ENCODE measurements at regions of chr17 and their contacts with region 1.

Region 1: GRCh38 chr17:51000835-51001638 is 119.6 kb downstream of the SPAG9 start:
- DNase-seq: no peak
- ATAC-seq: peak; percentile 59 to 65 (median 62)
- H3K4me3 ChIP-seq: no peak overlapping the region
- H3K27ac ChIP-seq: no peak overlapping the region
- H3K4me1 ChIP-seq: peaks cover 0 to 7% (median 0%) of the 10 kb centered on the region in 12 donors
- H3K27me3 ChIP-seq: no peaks in the 10 kb centered on the region
- CTCF ChIP-seq: peak; percentile 27 to 72 (median 57)
- POLR2A ChIP-seq: no peak

Region 2: DNA sequence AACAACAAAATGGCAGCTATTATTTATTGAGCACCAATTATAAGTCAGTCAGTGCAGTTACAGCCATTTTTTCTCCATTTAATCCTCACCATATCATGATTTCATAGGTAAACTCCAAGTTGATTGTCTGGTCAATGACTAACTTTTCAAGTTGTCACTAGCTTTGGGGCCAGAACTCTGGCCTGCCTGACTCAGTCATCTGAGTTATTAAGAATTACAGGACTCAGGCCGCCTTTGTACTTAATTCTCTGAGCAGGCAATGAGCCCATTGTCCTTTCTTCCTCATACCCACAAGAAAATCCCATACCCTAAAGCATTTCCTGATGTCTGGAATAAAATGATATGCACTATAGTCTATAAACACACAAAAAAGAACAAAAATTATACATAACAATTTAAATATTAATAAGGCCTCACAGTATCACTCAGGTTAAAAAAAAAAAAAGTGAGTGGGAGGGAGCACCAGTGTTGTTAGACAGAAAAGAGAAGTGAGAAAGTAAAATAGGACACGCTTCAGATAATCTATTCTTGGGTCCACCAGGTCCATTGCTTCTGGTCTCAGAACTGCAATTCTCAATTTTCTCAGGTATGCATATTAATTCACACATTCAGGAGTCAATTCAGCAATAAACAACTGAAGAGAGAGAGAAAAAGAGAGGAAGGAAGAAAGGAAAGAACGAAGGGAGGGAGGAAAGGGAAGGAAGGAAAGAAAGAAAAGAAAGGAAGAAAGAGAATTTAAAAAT is 49.4 kb after region 1 on chr17:
- intact Hi-C with region 1: loop called in 7 of 10 experiments (anchors 5 to 10 kb)
- DNase-seq: no peak
- ATAC-seq: no peak
- H3K4me3 ChIP-seq: no peak overlapping the region
- H3K27ac ChIP-seq: no peak overlapping the region
- H3K4me1 ChIP-seq: peaks cover 0 to 33% (median 3%) of the 10 kb centered on the region in 12 donors
- H3K27me3 ChIP-seq: no peaks in the 10 kb centered on the region
- CTCF ChIP-seq: no peak
- POLR2A ChIP-seq: no peak

Region 3: GRCh38 chr17:51166197-51166986 is 165.4 kb after region 1 on chr17 and contains the start of gene NME2:
- intact Hi-C with region 1: loop called in 2 of 10 experiments (anchors 5 kb)
- DNase-seq: peak; percentile 91 to 95 (median 94)
- ATAC-seq: peak; percentile 89 to 97 (median 97)
- H3K4me3 ChIP-seq: peak within 1 kb of the TSS; percentile 76 to 95 (median 90)
- H3K27ac ChIP-seq: peak within 1 kb of the TSS; percentile 73 to 99 (median 95)
- H3K4me1 ChIP-seq: peaks cover 0 to 20% (median 14%) of the 10 kb centered on the region in 12 donors
- H3K27me3 ChIP-seq: no peaks in the 10 kb centered on the region
- CTCF ChIP-seq: no peak
- POLR2A ChIP-seq: peak in 1 of 2 donors; percentile 65
- total RNA-seq, gene NME2: 171 to 386 (median 245) TPM